ENCODE measurements at regions of chr1 and their contacts with region 1.

Region 1: GRCh38 chr1:26035959-26036755 is 9.8 kb downstream of the SLC30A2 start:
- DNase-seq: peak; percentile 83 to 93 (median 89)
- ATAC-seq: peak; percentile 79 to 88 (median 82)
- H3K4me3 ChIP-seq: peak overlapping the region; percentile 66 to 97 (median 75)
- H3K27ac ChIP-seq: peak overlapping the region; percentile 60 to 97 (median 92)
- H3K4me1 ChIP-seq: peaks cover 0 to 36% (median 10%) of the 10 kb centered on the region in 12 donors
- H3K27me3 ChIP-seq: peaks cover 0 to 7% (median 0%) of the 10 kb centered on the region in 9 donors
- CTCF ChIP-seq: peak; percentile 98 to 100 (median 99)
- POLR2A ChIP-seq: no peak

Region 2: GRCh38 chr1:26066857-26067256 is 30.7 kb after region 1 on chr1:
- intact Hi-C with region 1: loop called in 1 of 10 experiments (anchors 1 kb)
- DNase-seq: peak; percentile 77 to 90 (median 85)
- ATAC-seq: peak; percentile 88 to 92 (median 91)
- H3K4me3 ChIP-seq: peak overlapping the region; percentile 43 to 91 (median 63)
- H3K27ac ChIP-seq: peak overlapping the region; percentile 71 to 100 (median 88)
- H3K4me1 ChIP-seq: peaks cover 0 to 21% (median 0%) of the 10 kb centered on the region in 12 donors
- H3K27me3 ChIP-seq: peaks cover 0 to 19% (median 0%) of the 10 kb centered on the region in 9 donors
- CTCF ChIP-seq: no peak
- POLR2A ChIP-seq: no peak

Region 3: GRCh38 chr1:26094677-26095383 is 58.7 kb after region 1 on chr1:
- intact Hi-C with region 1: loop called in 8 of 10 experiments (anchors 2 to 5 kb)
- DNase-seq: peak; percentile 51 to 87 (median 55)
- ATAC-seq: peak; percentile 71 to 79 (median 74)
- H3K4me3 ChIP-seq: peak overlapping the region in 7 of 12 donors; percentile 7 to 27 (median 18)
- H3K27ac ChIP-seq: peak overlapping the region; percentile 47 to 99 (median 88)
- H3K4me1 ChIP-seq: peaks cover 0 to 24% (median 14%) of the 10 kb centered on the region in 12 donors
- H3K27me3 ChIP-seq: peaks cover 0 to 13% (median 0%) of the 10 kb centered on the region in 9 donors
- CTCF ChIP-seq: peak in 7 of 12 donors; percentile 7 to 34 (median 22)
- POLR2A ChIP-seq: peak in 1 of 2 donors; percentile 39

Region 4: DNA sequence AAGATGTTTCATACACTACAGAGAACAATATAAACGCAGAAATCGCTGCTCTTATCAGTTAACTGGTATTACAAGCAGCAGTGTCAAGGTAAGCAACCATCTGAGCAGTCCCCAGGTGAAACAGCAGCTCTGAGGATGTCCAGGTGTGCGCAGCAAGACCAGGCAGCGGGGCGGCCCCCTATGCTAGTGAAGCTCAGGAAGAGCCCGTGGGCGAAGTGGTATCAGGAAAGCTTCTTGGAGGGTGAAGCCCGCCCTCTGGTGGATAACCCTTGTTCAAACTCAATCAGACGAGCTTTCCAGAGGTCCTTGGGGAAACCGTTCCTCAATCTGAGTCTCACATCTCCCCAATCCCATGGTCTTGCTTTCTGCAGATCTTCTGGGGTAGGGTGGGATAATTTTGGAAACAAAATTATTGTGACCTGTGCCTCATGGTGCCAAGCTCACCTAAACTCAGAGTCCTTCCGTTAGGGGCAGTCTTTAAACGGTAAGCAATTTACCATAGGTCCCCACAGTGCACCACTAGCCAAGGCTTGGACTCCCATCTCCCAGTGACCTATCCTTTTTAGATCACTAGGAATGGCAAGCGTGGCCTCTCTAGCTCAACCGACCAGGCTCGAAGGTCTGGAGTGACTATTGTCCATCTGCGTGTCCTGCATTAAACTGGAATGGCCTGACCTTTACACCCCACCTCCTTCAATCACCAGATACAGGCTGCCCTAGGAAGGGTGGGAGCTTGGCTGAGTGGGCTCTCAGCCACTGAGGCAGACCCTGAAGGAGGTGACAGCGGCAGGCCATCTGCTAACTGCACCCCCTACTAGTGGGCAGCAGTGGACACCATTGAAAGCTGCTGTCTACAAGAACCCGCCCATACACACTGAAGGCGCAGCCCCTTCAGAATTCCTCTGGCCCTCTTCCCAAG is 109.1 kb after region 1 on chr1:
- intact Hi-C with region 1: loop called in 9 of 10 experiments (anchors 1 to 5 kb)
- DNase-seq: peak; percentile 77 to 83 (median 80)
- ATAC-seq: peak; percentile 82 to 96 (median 94)
- H3K4me3 ChIP-seq: no peak overlapping the region
- H3K27ac ChIP-seq: no peak overlapping the region
- H3K4me1 ChIP-seq: peaks cover 0 to 10% (median 0%) of the 10 kb centered on the region in 12 donors
- H3K27me3 ChIP-seq: no peaks in the 10 kb centered on the region
- CTCF ChIP-seq: peak; percentile 71 to 89 (median 80)
- POLR2A ChIP-seq: no peak

Region 5: DNA sequence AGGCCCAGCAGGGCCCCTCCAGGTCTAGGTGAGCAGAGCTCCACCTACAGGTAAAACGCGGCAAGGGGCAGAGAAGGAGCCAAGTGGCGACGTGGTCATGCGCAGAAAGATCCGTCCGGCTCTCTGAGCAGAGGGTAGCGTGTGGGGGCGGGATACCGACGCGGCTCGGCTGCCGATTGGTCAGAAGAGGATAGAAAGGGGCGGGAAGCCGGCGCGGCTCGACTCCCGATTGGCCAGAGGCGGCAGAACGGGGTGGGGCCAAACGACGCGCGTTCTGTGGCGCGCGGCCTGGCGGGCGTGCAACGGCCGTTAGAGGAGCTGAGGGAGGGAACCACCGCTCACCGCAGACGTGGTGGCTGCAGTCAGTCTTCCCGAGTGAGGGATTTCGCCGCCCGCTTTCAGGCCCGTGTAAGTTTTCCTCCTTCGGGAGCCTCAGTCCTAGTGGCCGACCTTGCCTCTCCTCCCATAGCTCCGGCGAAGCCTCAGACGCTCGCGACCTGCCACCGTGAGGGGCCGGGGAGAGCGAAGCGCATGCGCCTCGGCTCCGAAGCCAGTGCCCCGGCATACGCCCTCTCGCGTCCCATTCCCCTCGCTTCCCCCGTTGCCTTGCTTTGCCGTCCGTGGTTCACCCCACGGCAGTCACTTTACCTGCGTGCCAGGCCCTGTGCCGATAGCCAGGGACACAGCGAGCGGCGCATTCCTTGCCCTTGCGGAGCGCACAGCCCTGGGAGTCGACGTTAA is 197.9 kb after region 1 on chr1 and contains the start of gene CEP85:
- intact Hi-C with region 1: loop called in 4 of 10 experiments (anchors 5 to 10 kb)
- DNase-seq: peak; percentile 97 to 99 (median 98)
- ATAC-seq: peak; percentile 99 to 100 (median 99)
- H3K4me3 ChIP-seq: peak within 1 kb of the TSS; percentile 48 to 90 (median 78)
- H3K27ac ChIP-seq: peak within 1 kb of the TSS; percentile 5 to 96 (median 93)
- H3K4me1 ChIP-seq: peaks cover 0 to 36% (median 11%) of the 10 kb centered on the region in 12 donors
- H3K27me3 ChIP-seq: no peaks in the 10 kb centered on the region
- CTCF ChIP-seq: peak; percentile 72 to 95 (median 86)
- POLR2A ChIP-seq: peak; percentile 61 to 93
- total RNA-seq, gene CEP85: 28.6 to 180 (median 48.7) TPM

Region 6: GRCh38 chr1:26321315-26322041 is 285.3 kb after region 1 on chr1:
- intact Hi-C with region 1: loop called in 1 of 10 experiments (anchors 10 kb)
- DNase-seq: peak; percentile 89 to 95 (median 92)
- ATAC-seq: peak; percentile 82 to 94 (median 92)
- H3K4me3 ChIP-seq: peak overlapping the region in 2 of 12 donors; percentile 30 to 34
- H3K27ac ChIP-seq: peak overlapping the region in 1 of 12 donors; percentile 60
- H3K4me1 ChIP-seq: peaks cover 0 to 47% (median 7%) of the 10 kb centered on the region in 12 donors
- H3K27me3 ChIP-seq: no peaks in the 10 kb centered on the region
- CTCF ChIP-seq: peak; percentile 81 to 92 (median 90)
- POLR2A ChIP-seq: no peak

Measured in heart left ventricle (tissue), 16 donors.